Endothelial cell of umbilical vein (primary cell): ENCODE measurements at regions of chr5 and their contacts with region 1.

Region 1: DNA sequence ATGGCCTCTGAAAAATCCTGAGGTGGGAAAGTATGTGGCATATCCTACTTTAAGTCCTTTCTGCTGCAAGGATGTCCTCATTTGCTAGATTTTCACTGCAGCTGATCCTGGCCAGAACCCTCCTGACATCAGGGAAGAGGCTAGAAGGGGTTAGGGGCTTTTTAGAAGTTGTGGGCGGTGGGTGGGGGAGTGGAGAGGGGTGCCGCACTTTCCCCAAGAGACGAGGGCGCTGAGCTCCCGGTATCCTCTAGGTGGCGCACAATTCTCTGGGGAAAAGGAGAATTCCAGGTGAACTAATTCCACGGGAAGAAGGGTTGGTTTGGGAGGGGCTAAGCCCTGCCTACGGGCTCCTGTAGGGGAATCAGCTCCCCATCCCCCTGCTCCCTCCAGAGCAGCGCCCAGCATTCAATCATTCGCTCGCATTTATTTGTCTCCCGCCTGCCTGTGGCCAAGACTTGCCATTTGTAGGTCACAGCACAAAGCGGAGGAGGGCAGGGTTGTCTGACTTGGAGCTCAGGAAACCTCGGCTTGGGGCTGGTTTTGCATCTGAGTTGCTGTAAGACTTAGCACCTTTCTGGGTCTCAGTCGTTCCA is 42.9 kb upstream of the HAND1 start:
- DNase-seq: peak; percentile 16
- H3K4me3 ChIP-seq: no peak overlapping the region
- H3K27ac ChIP-seq: no peak overlapping the region
- H3K4me1 ChIP-seq: no peaks in the 10 kb centered on the region
- H3K27me3 ChIP-seq: peaks cover 4 to 7% of the 10 kb centered on the region in 2 experiments
- CTCF ChIP-seq: peak; percentile 62 to 77
- POLR2A ChIP-seq: no peak

Region 2: DNA sequence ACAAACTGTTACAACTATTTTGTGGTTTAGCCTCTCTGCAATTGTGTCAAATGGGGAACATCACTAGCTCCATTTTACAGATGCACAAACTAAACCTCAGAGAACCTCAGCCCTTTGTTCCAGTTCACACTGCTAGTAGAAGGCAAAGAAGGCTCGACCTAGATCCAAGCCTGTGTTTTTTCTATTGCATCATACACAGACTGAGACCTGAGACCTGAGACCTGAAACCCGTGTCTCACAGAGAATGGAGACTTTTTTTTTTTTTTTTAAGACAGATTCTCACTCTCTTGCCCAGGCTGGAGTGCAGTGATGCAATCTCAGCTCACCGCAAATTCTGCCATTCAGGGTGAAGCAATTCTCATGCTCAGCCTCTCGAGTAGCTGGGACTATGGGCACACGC is 209.6 kb before region 1 on chr5:
- CTCF ChIA-PET with region 1: no interaction called
- POLR2A ChIA-PET with region 1: no interaction called
- dilution Hi-C with region 1: no loop called
- intact Hi-C with region 1: no loop called
- DNase-seq: no peak
- H3K4me3 ChIP-seq: no peak overlapping the region
- H3K27ac ChIP-seq: no peak overlapping the region
- H3K4me1 ChIP-seq: peaks cover 37% of the 10 kb centered on the region
- H3K27me3 ChIP-seq: no peaks in the 10 kb centered on the region
- CTCF ChIP-seq: no peak
- POLR2A ChIP-seq: no peak

Region 3: GRCh38 chr5:154467655-154468354 is 53.2 kb before region 1 on chr5:
- CTCF ChIA-PET with region 1: interaction called, 10 read pairs
- POLR2A ChIA-PET with region 1: no interaction called
- dilution Hi-C with region 1: no loop called
- intact Hi-C with region 1: no loop called
- DNase-seq: peak; percentile 56
- H3K4me3 ChIP-seq: no peak overlapping the region
- H3K27ac ChIP-seq: no peak overlapping the region
- H3K4me1 ChIP-seq: no peaks in the 10 kb centered on the region
- H3K27me3 ChIP-seq: peaks cover 31 to 35% of the 10 kb centered on the region in 2 experiments
- CTCF ChIP-seq: peak; percentile 90 to 91
- POLR2A ChIP-seq: no peak

Region 4: GRCh38 chr5:154486427-154486866 is 34.5 kb before region 1 on chr5:
- CTCF ChIA-PET with region 1: interaction called, 12 read pairs
- POLR2A ChIA-PET with region 1: no interaction called
- dilution Hi-C with region 1: no loop called
- intact Hi-C with region 1: no loop called
- DNase-seq: no peak
- H3K4me3 ChIP-seq: no peak overlapping the region
- H3K27ac ChIP-seq: no peak overlapping the region
- H3K4me1 ChIP-seq: no peaks in the 10 kb centered on the region
- H3K27me3 ChIP-seq: peaks cover 68 to 77% of the 10 kb centered on the region in 2 experiments
- CTCF ChIP-seq: no peak
- POLR2A ChIP-seq: no peak

Region 5: GRCh38 chr5:154493274-154493673 is 27.7 kb before region 1 on chr5:
- CTCF ChIA-PET with region 1: interaction called, 48 read pairs
- POLR2A ChIA-PET with region 1: no interaction called
- dilution Hi-C with region 1: no loop called
- intact Hi-C with region 1: no loop called
- DNase-seq: no peak
- H3K4me3 ChIP-seq: no peak overlapping the region
- H3K27ac ChIP-seq: no peak overlapping the region
- H3K4me1 ChIP-seq: no peaks in the 10 kb centered on the region
- H3K27me3 ChIP-seq: peaks cover 27 to 54% of the 10 kb centered on the region in 2 experiments
- CTCF ChIP-seq: no peak
- POLR2A ChIP-seq: no peak

Region 6: DNA sequence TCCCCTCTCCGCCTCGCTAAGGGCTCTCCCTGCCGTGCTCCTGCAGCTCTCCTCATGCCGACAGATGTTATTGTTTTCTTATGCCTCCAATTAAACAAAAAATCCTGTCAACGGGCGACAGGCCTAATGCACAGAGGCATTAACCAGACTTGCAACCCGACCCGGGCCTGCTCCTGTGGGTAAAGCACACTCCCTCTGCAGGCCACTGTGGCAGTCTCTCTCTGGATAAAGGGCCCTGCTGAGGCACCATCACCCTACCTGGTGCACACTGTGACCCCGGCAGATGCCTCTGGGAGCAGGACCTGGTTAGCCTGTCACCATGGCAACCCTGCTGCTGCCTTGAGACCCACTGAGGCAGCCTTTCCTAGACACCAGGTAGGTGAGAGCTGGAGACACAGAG is 15.3 kb before region 1 on chr5:
- CTCF ChIA-PET with region 1: interaction called, 48 read pairs
- POLR2A ChIA-PET with region 1: no interaction called
- dilution Hi-C with region 1: no loop called
- intact Hi-C with region 1: no loop called
- DNase-seq: no peak
- H3K4me3 ChIP-seq: no peak overlapping the region
- H3K27ac ChIP-seq: no peak overlapping the region
- H3K4me1 ChIP-seq: no peaks in the 10 kb centered on the region
- H3K27me3 ChIP-seq: peaks cover 0 to 9% of the 10 kb centered on the region in 2 experiments
- CTCF ChIP-seq: no peak
- POLR2A ChIP-seq: no peak

Region 7: GRCh38 chr5:154543380-154543779 is 22.4 kb after region 1 on chr5:
- CTCF ChIA-PET with region 1: interaction called, 17 read pairs
- POLR2A ChIA-PET with region 1: no interaction called
- dilution Hi-C with region 1: no loop called
- intact Hi-C with region 1: no loop called
- DNase-seq: no peak
- H3K4me3 ChIP-seq: no peak overlapping the region
- H3K27ac ChIP-seq: no peak overlapping the region
- H3K4me1 ChIP-seq: no peaks in the 10 kb centered on the region
- H3K27me3 ChIP-seq: peaks cover 0 to 2% of the 10 kb centered on the region in 2 experiments
- CTCF ChIP-seq: no peak
- POLR2A ChIP-seq: no peak

Region 8: DNA sequence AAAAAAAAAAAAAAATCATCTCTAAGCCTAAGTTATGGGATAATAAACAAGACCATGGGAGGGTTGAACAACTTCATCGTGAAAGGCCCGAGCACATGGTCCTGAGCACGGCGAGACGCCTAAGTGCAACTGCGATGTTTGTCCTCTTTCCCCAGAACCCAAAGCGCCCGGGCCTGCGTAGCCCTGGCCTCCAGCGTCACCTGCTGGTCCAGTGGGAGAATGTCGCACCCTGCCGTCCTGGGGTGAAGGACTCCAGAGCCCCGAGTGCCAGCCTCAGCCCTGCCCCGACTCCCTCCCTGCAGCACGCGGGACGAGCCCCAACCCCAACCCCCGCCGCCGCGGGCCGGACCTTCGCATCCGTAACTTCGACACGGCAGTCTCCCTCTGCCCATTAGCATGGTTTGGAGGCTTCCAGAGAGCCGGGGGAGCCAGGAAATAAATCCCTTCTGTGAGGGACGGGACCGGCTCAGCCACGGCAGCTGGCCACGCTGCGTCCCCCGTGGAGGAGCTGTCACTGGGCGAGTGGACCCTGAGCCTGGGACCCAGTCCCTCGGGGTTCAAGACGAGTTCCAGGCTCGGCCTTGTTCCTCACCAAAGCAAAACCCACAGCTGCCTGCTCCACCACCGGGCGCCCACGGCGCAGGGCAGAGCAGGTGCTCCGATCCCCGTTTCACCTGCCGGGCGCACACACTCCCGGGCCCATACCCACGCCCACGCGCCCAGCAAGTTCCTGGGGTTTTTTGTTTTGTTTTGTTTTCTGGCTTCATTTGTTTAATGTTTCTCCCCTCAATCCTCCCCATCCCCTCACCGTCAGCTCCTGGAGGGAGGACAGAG is 89.6 kb after region 1 on chr5:
- CTCF ChIA-PET with region 1: interaction called, 19 read pairs
- POLR2A ChIA-PET with region 1: no interaction called
- dilution Hi-C with region 1: no loop called
- intact Hi-C with region 1: loop called (anchors 1 kb)
- DNase-seq: peak; percentile 62
- H3K4me3 ChIP-seq: peak overlapping the region in 2 of 3 experiments; percentile 19 to 20
- H3K27ac ChIP-seq: no peak overlapping the region
- H3K4me1 ChIP-seq: peaks cover 4% of the 10 kb centered on the region
- H3K27me3 ChIP-seq: peaks cover 22 to 39% of the 10 kb centered on the region in 2 experiments
- CTCF ChIP-seq: peak; percentile 83 to 91
- POLR2A ChIP-seq: no peak

Region 9: DNA sequence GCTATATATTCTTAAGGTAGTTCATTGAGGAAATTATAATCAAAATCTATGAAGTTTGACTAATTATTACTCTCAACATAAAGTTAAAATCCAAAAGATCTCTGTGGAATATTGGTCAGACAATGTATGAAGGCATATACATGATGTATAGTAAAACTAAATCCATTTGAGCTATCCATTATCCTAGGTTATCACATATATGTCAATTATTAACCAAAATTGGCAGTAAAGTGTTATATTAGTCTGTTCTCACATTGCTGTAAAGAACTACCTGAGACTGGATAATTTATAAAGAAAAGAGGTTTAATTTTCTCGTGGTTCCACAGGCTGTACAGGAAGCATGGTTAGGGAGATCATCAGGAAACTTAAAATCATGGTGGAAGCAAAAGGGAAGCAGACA is 1294.3 kb after region 1 on chr5:
- CTCF ChIA-PET with region 1: no interaction called
- POLR2A ChIA-PET with region 1: no interaction called
- dilution Hi-C with region 1: no loop called
- intact Hi-C with region 1: no loop called
- DNase-seq: no peak
- H3K4me3 ChIP-seq: no peak overlapping the region
- H3K27ac ChIP-seq: no peak overlapping the region
- H3K4me1 ChIP-seq: no peaks in the 10 kb centered on the region
- H3K27me3 ChIP-seq: no peaks in the 10 kb centered on the region
- CTCF ChIP-seq: no peak
- POLR2A ChIP-seq: no peak